Ascending aorta (tissue), 2 donors: ENCODE measurements at regions of chr18 and their contacts with region 1.

Region 1: GRCh38 chr18:25896178-25896780 is 194.1 kb downstream of the SS18 start:
- DNase-seq: no peak
- H3K4me3 ChIP-seq: no peak overlapping the region
- H3K27ac ChIP-seq: no peak overlapping the region
- H3K4me1 ChIP-seq: no peaks in the 10 kb centered on the region
- H3K27me3 ChIP-seq: no peaks in the 10 kb centered on the region
- CTCF ChIP-seq: peak in 2 of 3 experiments; percentile 42 to 48

Region 2: DNA sequence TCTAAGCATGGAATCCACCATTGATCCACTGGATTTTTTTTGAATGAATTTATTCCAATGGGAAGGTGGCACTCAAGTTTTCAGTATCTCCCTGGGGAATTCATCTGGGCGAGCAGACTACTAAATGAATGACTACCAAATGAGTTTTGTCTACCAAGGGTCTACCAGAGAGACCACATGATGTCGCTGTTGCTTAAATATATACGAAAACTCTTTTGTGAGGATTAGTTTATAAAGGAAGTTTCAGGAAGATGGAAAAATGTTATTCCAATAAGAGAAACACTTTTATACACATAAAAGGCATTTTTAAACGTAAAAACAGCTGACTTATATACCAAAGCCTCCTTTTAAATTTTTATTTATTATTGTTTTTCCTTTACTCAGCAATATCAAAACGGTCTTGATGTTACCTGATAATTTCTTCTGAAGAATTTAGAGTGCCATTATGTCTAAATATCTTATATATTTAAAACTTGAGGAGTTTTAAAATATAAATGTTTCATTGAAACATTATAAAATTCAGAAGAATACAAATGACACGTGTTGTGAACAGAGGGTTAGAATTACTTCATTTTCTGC is 1296.1 kb before region 1 on chr18:
- intact Hi-C with region 1: loop called (anchors 5 kb)
- DNase-seq: no peak
- H3K4me3 ChIP-seq: no peak overlapping the region
- H3K27ac ChIP-seq: no peak overlapping the region
- H3K4me1 ChIP-seq: no peaks in the 10 kb centered on the region
- H3K27me3 ChIP-seq: no peaks in the 10 kb centered on the region
- CTCF ChIP-seq: peak; percentile 12 to 53 (median 38)

Region 3: DNA sequence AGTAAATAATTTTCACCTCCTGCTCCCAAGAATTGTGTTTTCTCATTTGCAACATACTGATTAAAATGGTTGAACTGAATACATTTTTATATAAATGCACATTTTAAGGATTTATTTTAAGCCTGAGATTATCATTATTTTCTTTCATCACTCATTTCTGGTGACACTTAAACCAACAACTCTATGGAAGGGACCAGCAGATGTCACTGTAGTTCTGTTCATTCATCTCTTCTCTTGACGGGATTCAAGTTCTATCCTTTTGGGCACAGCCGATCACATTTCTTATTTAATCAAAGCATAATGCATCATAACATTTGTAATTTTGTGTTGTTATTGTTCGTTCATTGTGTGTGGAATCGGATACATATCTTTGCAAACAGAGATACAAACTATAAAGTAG is 1018.0 kb before region 1 on chr18:
- intact Hi-C with region 1: loop called (anchors 2 kb)
- DNase-seq: no peak
- H3K4me3 ChIP-seq: no peak overlapping the region
- H3K27ac ChIP-seq: no peak overlapping the region
- H3K4me1 ChIP-seq: no peaks in the 10 kb centered on the region
- H3K27me3 ChIP-seq: no peaks in the 10 kb centered on the region
- CTCF ChIP-seq: peak in 1 of 3 experiments; percentile 44

Region 4: DNA sequence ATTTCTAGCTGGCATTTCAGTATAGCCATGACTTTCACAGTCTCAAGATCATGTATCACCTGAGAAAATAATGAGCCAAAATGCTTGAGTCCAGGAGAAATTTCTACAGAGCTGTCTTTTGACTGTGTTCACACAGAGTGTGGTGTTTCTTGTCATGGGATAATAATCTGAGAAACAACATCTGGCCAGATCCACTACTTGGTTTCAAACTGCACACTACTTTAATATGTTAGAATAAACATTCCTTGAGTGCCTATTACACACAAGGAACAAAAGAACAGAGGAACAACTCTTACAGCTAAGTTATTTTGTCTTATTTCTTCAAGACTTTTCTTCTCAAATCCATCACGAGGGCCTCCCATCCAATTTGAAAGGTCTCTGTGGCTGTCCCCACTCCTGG is 85.9 kb after region 1 on chr18:
- intact Hi-C with region 1: no loop called
- DNase-seq: no peak
- H3K4me3 ChIP-seq: no peak overlapping the region
- H3K27ac ChIP-seq: no peak overlapping the region
- H3K4me1 ChIP-seq: no peaks in the 10 kb centered on the region
- H3K27me3 ChIP-seq: no peaks in the 10 kb centered on the region
- CTCF ChIP-seq: no peak